ENCODE measurements at regions of chr5 and their contacts with region 1.

Region 1: DNA sequence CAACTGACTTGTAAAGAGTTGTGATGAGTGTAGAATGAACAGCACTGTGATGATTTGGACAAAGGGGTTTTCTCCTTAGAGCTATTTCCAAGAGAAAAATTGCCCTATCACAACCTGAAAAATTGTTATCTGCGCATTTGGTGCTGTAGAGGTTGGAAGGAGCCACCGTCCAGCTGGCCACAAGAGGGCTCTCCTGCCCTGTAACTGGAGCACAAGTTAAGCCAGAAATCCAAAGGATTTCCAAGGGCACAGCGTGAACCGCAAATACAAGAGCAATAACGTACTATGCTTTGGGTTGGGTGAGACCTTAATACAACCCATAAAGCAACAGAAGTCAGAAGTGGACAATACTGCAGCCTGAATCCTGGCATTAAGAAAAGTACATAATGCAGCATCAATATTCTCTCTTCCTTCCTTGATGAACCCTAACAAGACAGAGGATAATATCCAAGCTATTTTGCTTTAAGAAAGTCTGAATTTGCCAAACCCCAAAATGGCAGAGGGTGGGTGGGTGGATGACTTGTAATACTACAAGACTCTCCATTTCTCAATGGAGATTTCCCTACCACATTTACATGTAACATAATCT is 56.8 kb upstream of the SMIM32 start:
- DNase-seq: peak; percentile 69 to 79
- H3K4me3 ChIP-seq: no peak overlapping the region
- H3K27ac ChIP-seq: no peak overlapping the region
- H3K4me1 ChIP-seq: no peaks in the 10 kb centered on the region
- H3K27me3 ChIP-seq: no peaks in the 10 kb centered on the region
- CTCF ChIP-seq: peak; percentile 36 to 89 (median 77)
- POLR2A ChIP-seq: no peak

Region 2: GRCh38 chr5:135880278-135880677 is 369.5 kb before region 1 on chr5:
- intact Hi-C with region 1: no loop called
- DNase-seq: no peak
- H3K4me3 ChIP-seq: no peak overlapping the region
- H3K27ac ChIP-seq: no peak overlapping the region
- H3K4me1 ChIP-seq: no peaks in the 10 kb centered on the region
- H3K27me3 ChIP-seq: no peaks in the 10 kb centered on the region
- CTCF ChIP-seq: no peak
- POLR2A ChIP-seq: no peak

Region 3: DNA sequence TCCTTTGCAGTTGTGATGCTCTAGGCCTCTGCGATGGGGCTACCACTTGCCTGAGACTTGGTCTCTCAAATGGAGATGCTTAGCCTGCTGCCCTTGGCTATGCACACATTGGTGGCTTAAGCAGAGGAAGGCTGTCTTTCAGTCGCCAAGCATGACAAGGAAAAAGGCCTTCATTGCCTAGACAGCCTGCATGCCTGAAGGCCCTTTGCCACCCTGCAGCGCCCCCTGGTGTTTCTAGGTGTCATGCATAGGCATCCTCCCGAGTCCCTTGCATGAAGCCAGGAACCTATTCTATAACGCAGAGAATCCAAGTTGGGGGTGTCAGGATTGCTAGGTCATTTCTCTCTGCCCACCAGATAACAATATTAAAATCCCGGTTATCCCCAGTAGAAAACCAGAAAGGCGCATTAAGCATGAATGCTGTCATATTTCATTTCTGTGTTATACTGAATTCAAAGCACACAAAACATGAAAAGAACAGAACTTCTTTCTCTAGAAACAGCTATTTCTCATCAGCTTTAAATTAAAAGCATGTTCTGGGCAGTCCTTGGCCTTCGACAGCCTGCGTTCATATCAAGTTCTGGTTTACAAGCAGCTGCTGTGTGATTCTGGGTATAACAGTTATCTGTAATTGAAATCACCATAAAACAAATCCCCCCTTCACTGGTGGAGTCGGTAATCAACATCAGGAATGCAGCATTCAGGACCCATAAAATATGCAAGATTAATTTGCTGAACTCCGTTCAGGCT is 175.2 kb after region 1 on chr5:
- intact Hi-C with region 1: loop called (anchors 10 kb)
- DNase-seq: peak; percentile 80 to 87
- H3K4me3 ChIP-seq: no peak overlapping the region
- H3K27ac ChIP-seq: no peak overlapping the region
- H3K4me1 ChIP-seq: no peaks in the 10 kb centered on the region
- H3K27me3 ChIP-seq: no peaks in the 10 kb centered on the region
- CTCF ChIP-seq: peak; percentile 12 to 76 (median 65)
- POLR2A ChIP-seq: no peak

Region 4: DNA sequence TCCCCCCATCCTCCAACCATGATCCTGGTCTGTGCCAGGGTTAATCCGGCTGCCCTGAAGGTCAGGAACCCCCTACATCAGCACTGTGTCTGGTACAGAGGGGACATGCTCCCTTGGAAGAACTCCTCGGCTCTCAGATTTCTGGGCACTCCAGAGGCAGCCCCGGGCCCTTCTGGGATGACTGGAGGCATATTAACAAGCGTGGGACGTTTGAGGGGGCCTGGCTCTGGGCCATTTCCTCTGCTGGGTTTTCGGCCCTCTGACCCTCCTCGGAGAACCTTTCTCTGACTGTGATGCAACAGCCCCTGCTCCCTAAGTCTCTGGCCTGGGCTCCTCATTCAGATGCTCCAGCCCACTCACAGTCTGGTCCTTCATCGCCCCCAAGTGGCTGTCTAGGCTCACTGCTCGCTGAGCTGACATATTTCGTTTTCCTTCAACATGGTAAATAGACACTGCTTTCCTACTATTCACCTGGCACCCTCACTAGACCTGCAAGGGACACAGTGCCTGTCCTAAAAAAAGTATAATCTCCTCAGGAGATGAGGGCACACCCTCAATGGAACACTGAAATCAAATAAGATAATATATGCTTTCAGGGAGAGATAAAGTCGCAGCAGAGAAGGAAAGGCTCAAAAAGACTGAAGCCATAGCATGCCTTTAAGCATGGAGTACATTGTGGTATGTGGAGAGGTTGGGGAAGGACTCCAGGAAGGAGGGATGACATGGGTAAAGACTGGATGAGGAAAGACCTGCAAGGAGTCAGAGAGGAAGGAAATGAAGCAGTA is 520.3 kb after region 1 on chr5:
- intact Hi-C with region 1: loop called (anchors 5 kb)
- DNase-seq: peak; percentile 68 to 79
- H3K4me3 ChIP-seq: no peak overlapping the region
- H3K27ac ChIP-seq: no peak overlapping the region
- H3K4me1 ChIP-seq: no peaks in the 10 kb centered on the region
- H3K27me3 ChIP-seq: no peaks in the 10 kb centered on the region
- CTCF ChIP-seq: peak; percentile 67 to 93 (median 80)
- POLR2A ChIP-seq: no peak

Measured in thyroid gland (tissue), 4 donors.